Right ventricle myocardium inferior (tissue), 1 donor: ENCODE measurements at regions of chr5 and their contacts with region 1.

Region 1: GRCh38 chr5:122192497-122193496 is 63.5 kb downstream of the ZNF474 start:
- DNase-seq: no peak
- ATAC-seq: peak; percentile 81

Region 2: GRCh38 chr5:122091936-122092600 is 100.7 kb before region 1 on chr5:
- intact Hi-C with region 1: no loop called
- DNase-seq: no peak
- ATAC-seq: no peak

Region 3: DNA sequence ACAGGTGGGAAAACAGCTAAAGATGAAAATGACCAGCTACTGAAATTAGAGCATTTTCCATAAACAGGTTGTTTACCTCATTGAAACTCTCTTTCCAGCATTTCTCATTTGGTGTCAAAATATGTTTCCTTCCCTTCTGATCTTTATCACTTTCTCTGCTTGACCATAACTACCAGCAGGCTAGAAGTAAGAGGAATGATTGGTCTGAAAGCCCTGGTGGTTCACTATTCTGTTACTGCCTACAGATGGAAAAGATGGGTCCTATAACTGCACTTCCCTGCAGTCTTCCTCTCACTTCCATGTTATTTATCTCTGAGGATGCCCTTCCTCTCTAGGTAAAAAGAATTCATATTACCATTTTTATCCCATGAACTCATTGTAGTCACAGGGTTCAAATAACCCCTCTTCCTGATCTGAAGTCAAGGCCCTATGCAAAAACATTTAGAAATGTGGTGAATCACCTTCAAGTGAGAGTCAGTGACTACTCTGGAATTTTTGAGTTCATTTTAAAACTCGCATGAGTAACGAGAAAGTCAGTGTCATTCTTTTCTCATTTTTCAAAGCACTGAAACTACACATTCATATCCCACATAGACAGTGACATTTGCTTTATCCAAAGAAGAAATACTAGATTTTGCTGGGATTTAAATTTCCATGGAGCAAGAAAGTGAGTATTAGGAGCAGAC is 11.8 kb before region 1 on chr5:
- intact Hi-C with region 1: no loop called
- DNase-seq: no peak
- ATAC-seq: no peak

Region 4: DNA sequence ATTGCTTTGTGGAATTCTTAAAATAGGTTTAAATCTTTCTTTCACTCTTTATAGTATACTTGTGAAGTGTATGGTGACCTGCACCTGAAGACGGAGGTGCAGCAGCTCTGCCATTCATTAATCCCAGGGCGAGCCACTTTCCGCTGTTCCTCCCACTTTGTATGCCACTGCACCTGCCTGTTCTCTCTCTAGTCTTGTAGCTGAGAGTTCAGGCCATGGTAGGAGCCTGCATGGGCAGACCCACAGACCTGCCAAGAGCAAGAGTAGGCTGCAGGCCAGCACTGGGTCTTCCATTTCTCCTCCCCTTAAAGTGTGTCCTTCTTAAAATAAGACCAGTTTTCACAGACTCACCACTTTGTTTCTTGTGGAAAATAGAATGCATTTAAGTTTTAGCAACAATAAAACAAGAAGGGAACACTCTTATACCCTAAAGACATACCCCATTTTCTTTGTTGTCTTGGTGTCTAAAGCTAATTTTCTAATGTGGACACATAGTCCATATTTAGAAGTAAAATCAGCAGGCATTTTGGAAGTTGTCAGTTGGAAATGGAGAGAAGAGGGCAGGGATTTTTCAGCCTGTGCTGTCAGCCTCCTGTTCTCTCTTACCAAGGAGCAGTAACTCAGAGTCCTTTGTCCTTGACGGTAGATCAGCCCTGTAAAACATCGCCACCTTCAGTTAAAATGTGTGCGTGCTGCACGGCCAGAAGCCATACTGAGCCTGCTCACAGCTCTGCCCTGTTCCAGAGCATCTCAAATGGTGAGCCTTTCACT is 222.4 kb after region 1 on chr5:
- intact Hi-C with region 1: loop called (anchors 1 kb)
- DNase-seq: peak; percentile 53
- ATAC-seq: peak; percentile 93

Region 5: DNA sequence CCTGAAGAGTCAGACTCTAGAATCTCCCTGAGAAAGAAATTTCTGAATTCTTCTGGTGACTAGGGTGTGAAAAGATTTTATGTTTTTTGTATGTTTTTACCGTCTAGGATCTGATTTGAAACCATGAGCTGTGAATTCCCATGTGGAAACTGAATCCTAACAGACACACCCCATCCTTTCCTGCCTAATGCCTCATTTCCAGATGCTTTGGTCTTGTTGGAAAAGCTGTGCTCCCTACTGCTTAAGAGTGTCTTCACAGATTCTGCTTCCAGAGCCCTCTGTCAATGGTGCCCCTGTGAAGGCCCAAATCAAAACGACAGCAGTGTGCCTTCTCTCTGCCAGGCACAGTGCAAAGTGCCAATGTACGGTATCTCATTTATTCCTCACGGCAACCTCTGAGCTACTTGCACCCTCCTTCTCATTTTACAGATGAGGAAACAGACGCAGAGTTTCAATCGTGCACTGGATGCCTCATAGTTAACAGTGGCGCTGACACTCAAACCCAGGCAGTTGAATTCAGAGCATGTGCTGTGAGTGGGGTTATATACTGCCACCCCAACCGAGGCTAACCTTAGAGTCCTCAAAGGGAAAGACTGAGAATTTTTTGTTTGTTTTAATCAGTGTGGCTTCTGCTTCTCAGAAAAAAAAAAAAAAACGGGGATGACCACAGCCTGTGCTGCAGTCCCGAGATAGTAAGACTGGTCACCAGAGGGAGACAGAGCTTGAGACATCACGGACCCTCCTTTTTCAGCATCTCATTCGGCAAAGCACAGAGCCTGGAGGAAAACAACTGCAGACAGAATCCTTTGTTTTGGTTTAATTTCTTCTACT is 307.7 kb after region 1 on chr5:
- intact Hi-C with region 1: loop called (anchors 10 kb)
- DNase-seq: no peak
- ATAC-seq: peak; percentile 69

Region 6: DNA sequence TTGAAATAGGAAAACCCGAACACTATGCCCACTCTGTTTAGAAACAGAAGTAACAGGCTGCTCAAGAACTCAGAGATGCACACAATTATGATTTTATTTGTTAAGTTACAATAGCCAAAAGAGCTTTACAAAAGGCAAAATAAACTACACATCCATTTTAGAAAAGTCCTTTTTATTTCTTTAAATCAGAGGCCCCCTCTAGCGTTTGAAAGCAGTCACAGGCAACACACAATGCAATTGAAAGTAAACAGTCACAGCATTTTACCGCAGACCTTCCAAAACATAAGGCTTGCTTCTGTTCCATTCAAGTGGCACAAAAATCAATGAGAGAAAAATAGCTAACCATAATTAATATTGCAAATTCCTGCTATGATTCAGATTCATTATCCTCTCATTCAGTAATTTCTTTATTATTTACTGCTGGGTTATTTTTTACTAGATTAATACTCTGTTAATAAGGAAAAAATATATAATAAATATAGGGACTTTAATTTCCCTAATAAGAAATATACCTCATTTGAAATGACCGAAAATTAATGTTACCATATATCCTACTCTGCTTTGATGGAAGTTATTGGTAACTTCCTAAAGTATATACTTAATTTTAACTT is 1152.1 kb after region 1 on chr5:
- intact Hi-C with region 1: loop called (anchors 10 kb)
- DNase-seq: no peak
- ATAC-seq: no peak